Heart left ventricle (tissue), 16 donors: ENCODE measurements at regions of chr13 and their contacts with region 1.

Region 1: GRCh38 chr13:41652727-41653361 is 195.5 kb downstream of the RGCC start:
- DNase-seq: peak in 1 of 5 donors; percentile 25
- ATAC-seq: peak in 2 of 4 donors; percentile 25 to 35
- H3K4me3 ChIP-seq: no peak overlapping the region
- H3K27ac ChIP-seq: peak overlapping the region in 6 of 12 donors; percentile 2 to 35 (median 19)
- H3K4me1 ChIP-seq: peaks cover 0 to 26% (median 12%) of the 10 kb centered on the region in 12 donors
- H3K27me3 ChIP-seq: no peaks in the 10 kb centered on the region
- CTCF ChIP-seq: peak; percentile 32 to 76 (median 66)
- POLR2A ChIP-seq: no peak

Region 2: DNA sequence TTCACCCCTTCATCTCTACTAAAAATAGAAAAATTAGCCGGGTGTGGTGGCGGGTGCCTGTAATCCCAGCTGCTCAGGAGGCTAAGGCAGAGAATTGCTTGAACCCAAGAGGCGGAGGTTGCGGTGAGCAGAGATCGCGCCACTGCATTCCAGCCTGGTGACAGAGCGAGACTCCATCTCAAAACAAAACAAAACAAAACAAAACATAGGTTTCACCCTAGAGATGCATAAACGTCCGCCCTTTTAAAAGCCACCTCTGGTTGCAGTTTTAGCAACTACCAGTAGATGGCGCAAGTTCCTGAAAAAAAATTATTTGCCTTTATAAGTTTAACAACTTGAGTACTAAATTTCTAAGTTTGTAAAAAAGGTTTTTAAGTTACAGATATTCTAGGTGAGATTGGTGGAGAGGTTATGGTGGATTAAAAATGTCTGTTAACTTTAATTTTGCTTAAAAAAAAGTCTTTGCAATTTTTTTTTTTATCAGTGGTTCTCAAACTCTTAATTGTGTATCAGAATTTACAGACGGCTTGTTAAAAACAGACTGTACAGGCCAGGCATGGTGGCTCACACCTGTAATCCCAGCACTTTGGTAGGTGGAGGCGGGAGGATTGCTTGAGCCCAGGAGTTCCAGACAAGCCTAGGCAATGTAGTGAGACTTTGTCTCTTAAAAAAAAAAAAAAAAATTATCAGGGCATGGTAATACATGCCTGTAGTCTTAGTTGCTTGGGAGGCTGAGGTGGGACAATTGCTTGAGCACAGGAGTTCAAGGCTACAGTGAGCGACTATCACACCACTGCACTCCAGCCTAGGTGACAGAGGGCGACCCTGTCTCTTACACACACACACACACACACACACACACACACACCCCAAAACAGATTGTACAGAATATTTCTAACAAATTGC is 299.7 kb before region 1 on chr13:
- intact Hi-C with region 1: loop called in 9 of 10 experiments (anchors 2 to 5 kb)
- DNase-seq: peak in 1 of 5 donors; percentile 40
- ATAC-seq: peak in 3 of 4 donors; percentile 38 to 58 (median 46)
- H3K4me3 ChIP-seq: no peak overlapping the region
- H3K27ac ChIP-seq: peak overlapping the region in 1 of 12 donors; percentile 44
- H3K4me1 ChIP-seq: peaks cover 0 to 26% (median 0%) of the 10 kb centered on the region in 12 donors
- H3K27me3 ChIP-seq: no peaks in the 10 kb centered on the region
- CTCF ChIP-seq: peak; percentile 72 to 89 (median 83)
- POLR2A ChIP-seq: no peak

Region 3: DNA sequence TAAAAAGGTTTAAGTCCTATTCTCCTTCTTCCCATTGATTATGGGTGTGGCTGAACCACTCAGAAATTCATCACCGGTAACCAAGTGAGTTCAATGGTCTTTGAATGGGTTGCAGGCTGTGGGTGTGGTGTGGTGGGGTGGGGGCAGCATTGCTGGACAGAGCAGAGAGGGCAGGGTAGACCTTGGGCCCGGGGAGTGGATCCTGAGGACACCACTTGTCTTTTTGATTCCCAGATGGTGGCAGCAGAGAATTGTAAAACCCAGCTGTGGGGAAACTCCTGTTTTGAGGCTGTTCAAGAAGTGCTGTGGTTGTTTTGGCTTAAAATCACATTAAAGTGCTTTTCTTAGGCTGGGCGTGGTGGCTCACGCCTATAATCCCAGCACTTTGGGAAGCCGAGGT is 241.3 kb before region 1 on chr13:
- intact Hi-C with region 1: loop called (anchors 2 to 10 kb)
- DNase-seq: no peak
- ATAC-seq: peak in 3 of 4 donors; percentile 54 to 57 (median 55)
- H3K4me3 ChIP-seq: no peak overlapping the region
- H3K27ac ChIP-seq: no peak overlapping the region
- H3K4me1 ChIP-seq: no peaks in the 10 kb centered on the region
- H3K27me3 ChIP-seq: no peaks in the 10 kb centered on the region
- CTCF ChIP-seq: peak in 11 of 12 donors; percentile 8 to 54 (median 39)
- POLR2A ChIP-seq: no peak

Region 4: DNA sequence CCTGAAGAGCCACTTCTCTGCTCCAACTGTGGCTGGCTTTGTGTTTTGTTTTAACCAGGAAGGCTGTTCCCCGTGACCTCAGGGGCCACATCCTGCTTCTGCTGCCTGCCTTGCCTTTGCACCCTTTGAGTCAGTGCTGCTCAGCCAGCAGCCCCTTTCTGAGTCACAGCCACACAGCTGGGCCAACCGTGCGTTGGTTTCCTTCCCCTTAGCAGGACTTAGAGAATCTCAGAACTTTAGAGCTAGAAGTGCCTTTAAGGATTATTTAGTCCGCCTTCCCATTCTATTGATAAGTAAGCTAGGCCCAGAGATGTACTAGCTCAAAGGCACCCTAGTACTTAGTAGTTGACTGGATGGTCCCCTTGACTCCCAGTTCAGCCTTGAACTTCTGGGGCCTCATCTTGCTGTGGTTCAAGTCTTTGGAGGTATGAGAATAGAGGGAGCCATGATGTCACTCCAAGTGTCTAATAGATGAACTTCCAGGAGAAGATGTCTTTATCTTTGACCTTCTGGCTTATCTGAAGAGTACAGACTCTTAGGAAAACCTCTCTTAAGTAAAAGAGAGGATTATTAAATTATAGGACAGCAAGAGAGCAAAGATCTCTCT is 187.5 kb before region 1 on chr13:
- intact Hi-C with region 1: loop called in 3 of 10 experiments (anchors 5 to 10 kb)
- DNase-seq: peak; percentile 67 to 83 (median 71)
- ATAC-seq: peak; percentile 63 to 89 (median 80)
- H3K4me3 ChIP-seq: no peak overlapping the region
- H3K27ac ChIP-seq: peak overlapping the region; percentile 8 to 90 (median 71)
- H3K4me1 ChIP-seq: peaks cover 0 to 64% (median 25%) of the 10 kb centered on the region in 12 donors
- H3K27me3 ChIP-seq: no peaks in the 10 kb centered on the region
- CTCF ChIP-seq: no peak
- POLR2A ChIP-seq: no peak

Region 5: GRCh38 chr13:41596190-41596589 is 56.7 kb before region 1 on chr13:
- intact Hi-C with region 1: loop called in 1 of 10 experiments (anchors 10 kb)
- DNase-seq: no peak
- ATAC-seq: peak in 1 of 4 donors; percentile 28
- H3K4me3 ChIP-seq: no peak overlapping the region
- H3K27ac ChIP-seq: peak overlapping the region in 1 of 12 donors; percentile 15
- H3K4me1 ChIP-seq: peaks cover 0 to 14% (median 8%) of the 10 kb centered on the region in 12 donors
- H3K27me3 ChIP-seq: no peaks in the 10 kb centered on the region
- CTCF ChIP-seq: peak in 4 of 12 donors; percentile 12 to 31 (median 26)
- POLR2A ChIP-seq: no peak

Region 6: DNA sequence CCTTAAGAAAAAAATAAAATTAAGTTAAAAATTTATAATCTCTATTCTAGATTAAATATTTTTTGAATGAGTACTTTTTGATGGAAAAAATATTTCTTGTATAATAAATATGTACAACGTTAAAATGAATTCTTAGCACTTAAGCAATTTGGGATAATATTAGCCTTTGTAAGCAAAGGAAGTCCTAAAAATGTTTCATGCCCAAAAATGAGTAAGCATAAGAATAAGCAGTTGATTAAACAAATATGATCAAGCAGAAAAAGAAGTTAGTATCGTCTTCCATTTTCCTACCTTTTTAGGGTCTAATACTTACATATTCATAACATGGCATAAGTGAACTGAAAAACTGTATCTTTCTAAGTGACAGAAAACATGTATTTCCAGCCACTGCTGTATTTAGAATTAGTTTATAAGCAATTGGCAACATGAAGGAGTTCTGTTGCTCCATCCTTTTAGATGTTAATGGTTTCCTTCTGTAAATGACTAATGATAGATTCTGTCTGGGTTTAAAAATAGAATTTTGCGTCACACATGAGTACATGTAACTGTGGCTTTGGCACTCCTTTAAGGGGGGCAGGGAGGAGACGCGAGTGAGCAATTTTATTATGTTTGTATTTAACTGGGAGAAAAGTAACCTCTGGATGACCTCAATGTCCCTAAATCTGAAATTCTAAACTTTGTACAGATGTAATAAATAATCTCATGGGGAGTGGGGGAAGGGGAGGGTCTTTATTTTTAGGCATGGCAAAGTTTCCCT is 41.9 kb after region 1 on chr13:
- intact Hi-C with region 1: no loop called
- DNase-seq: peak in 4 of 5 donors; percentile 70 to 77 (median 72)
- ATAC-seq: peak; percentile 90 to 97 (median 96)
- H3K4me3 ChIP-seq: peak overlapping the region in 5 of 12 donors; percentile 6 to 18 (median 13)
- H3K27ac ChIP-seq: peak overlapping the region; percentile 6 to 81 (median 74)
- H3K4me1 ChIP-seq: peaks cover 0 to 31% (median 18%) of the 10 kb centered on the region in 12 donors
- H3K27me3 ChIP-seq: no peaks in the 10 kb centered on the region
- CTCF ChIP-seq: no peak
- POLR2A ChIP-seq: no peak